ENCODE measurements at regions of chr12 and their contacts with region 1.

Region 1: DNA sequence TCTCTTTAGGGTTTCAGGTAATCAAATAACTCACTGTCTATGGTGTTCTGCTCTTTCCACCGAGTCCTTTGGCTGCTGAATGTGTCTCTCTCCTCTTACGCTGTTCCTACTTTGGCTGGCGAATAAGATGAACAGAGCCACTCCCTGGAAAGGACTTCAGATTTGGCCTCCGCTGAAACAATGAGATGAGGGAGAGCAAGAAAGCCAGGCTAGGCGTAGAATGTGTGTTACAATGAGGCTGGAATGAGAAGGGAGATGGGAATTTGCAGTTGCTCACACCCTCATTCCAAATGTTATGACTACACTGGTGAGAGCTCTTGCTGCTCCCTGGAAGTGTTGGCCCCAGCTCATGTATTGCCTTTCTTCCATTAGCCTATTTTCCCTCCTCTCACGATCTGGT is at the start of gene MFAP5:
- DNase-seq: no peak
- H3K4me3 ChIP-seq: peak within 1 kb of the TSS; percentile 55
- H3K27ac ChIP-seq: peak within 1 kb of the TSS; percentile 68
- H3K4me1 ChIP-seq: peaks cover 5% of the 10 kb centered on the region
- H3K27me3 ChIP-seq: peaks cover 8% of the 10 kb centered on the region
- CTCF ChIP-seq: no peak
- total RNA-seq, gene MFAP5: 55.8 TPM

Region 2: GRCh38 chr12:8722286-8722685 is 59.7 kb after region 1 on chr12:
- intact Hi-C with region 1: no loop called
- DNase-seq: no peak
- H3K4me3 ChIP-seq: no peak overlapping the region
- H3K27ac ChIP-seq: no peak overlapping the region
- H3K4me1 ChIP-seq: no peaks in the 10 kb centered on the region
- H3K27me3 ChIP-seq: no peaks in the 10 kb centered on the region
- CTCF ChIP-seq: no peak

Region 3: GRCh38 chr12:8890313-8891085 is 227.9 kb after region 1 on chr12:
- intact Hi-C with region 1: loop called (anchors 10 kb)
- DNase-seq: no peak
- H3K4me3 ChIP-seq: peak overlapping the region; percentile 58
- H3K27ac ChIP-seq: peak overlapping the region; percentile 6
- H3K4me1 ChIP-seq: no peaks in the 10 kb centered on the region
- H3K27me3 ChIP-seq: no peaks in the 10 kb centered on the region
- CTCF ChIP-seq: peak; percentile 94

Measured in left ventricle myocardium inferior (tissue), 1 donor.